ENCODE measurements at regions of chr7 and their contacts with region 1.

Region 1: GRCh38 chr7:77415823-77416622 is at the start of gene GSAP:
- DNase-seq: peak in 9 of 10 donors; percentile 18 to 73 (median 51)
- ATAC-seq: peak; percentile 67 to 71
- H3K4me3 Mint-ChIP-seq: peak within 1 kb of the TSS; percentile 72 to 91 (median 82)
- H3K27ac Mint-ChIP-seq: peak within 1 kb of the TSS; percentile 13 to 91 (median 85)
- H3K4me1 Mint-ChIP-seq: peaks cover 6 to 54% (median 45%) of the 10 kb centered on the region in 4 donors
- H3K27me3 Mint-ChIP-seq: peaks cover 0 to under 1% (median 0%) of the 10 kb centered on the region in 5 donors
- polyA plus RNA-seq, gene GSAP: 5.9 to 7.8 (median 6.5) TPM

Region 2: DNA sequence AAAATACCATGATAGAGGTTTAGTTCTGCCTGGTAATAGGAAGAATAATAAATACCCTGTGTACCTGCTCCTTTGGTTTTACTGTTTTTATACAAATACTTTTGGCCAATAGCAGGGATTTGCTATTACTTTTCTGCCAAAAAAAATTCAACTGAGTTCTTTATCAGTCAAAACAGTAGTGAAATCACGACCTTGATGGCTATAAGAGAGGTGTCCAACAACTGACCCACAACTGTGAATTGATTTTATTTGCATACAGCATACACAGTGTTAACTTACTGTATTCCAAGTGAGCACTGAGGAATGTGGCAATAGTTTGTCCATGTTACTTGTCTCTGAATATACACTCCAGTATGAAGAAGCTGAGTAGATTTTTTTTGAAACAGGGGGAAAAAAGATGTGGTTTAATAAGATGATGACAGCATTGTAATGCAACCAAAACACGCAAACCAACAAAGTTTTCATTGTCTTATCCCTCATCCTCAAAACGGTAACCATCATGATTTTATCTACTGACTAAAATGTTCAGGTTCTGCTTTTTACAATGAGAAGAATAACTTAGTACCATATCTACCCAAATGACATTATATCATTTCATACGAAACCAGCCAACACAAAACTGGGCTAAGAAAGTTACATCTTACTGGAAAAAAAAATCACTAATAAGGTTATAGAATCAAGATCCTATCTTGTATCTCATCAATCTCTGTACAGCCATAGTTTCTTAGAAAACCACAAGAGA is 63.2 kb before region 1 on chr7:
- POLR2A ChIA-PET with region 1: interaction called, 17 read pairs
- DNase-seq: peak in 3 of 10 donors; percentile 12 to 27 (median 19)
- ATAC-seq: no peak
- H3K4me3 Mint-ChIP-seq: peak overlapping the region in 9 of 10 donors; percentile 13 to 81 (median 56)
- H3K27ac Mint-ChIP-seq: peak overlapping the region; percentile 12 to 95 (median 73)
- H3K4me1 Mint-ChIP-seq: peaks cover 37 to 80% (median 72%) of the 10 kb centered on the region in 4 donors
- H3K27me3 Mint-ChIP-seq: no peaks in the 10 kb centered on the region

Region 3: DNA sequence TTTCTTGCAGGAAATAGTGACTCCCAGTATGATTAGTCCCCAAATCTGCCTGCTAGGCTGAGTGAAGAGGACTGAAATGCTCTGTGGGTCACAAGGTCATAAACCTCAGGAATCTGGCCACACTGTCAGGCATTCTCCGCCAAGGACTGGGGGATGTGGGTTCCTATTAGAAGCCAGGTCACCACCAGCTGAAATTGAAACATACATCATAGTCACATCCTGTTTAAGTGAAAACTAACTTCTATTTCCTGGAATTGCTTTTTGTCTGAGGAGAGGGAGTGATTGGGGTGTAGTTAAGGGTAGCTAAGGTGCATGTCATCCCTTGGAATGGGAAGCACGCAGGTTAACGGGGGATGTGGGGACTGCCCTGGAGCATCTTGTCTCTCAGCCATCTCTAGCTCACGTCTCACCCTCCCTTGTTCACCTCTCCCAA is 12.0 kb after region 1 on chr7:
- POLR2A ChIA-PET with region 1: interaction called, 12 read pairs
- DNase-seq: peak in 1 of 10 donors; percentile 6
- ATAC-seq: peak in 1 of 2 donors; percentile 44
- H3K4me3 Mint-ChIP-seq: peak overlapping the region in 7 of 10 donors; percentile 1 to 66 (median 44)
- H3K27ac Mint-ChIP-seq: peak overlapping the region in 9 of 10 donors; percentile 3 to 74 (median 49)
- H3K4me1 Mint-ChIP-seq: peaks cover 9 to 31% (median 27%) of the 10 kb centered on the region in 4 donors
- H3K27me3 Mint-ChIP-seq: no peaks in the 10 kb centered on the region

Region 4: GRCh38 chr7:77542409-77542808 is 126.4 kb after region 1 on chr7:
- POLR2A ChIA-PET with region 1: no interaction called
- DNase-seq: no peak
- ATAC-seq: no peak
- H3K4me3 Mint-ChIP-seq: no peak overlapping the region
- H3K27ac Mint-ChIP-seq: peak overlapping the region in 8 of 10 donors; percentile 2 to 78 (median 19)
- H3K4me1 Mint-ChIP-seq: peaks cover 18 to 63% (median 51%) of the 10 kb centered on the region in 4 donors
- H3K27me3 Mint-ChIP-seq: no peaks in the 10 kb centered on the region

Measured in naive thymus-derived CD8-positive, alpha-beta T cell (primary cell).